Psoas muscle (tissue), 8 donors: ENCODE measurements at regions of chr9 and their contacts with region 1.

Region 1: GRCh38 chr9:109244157-109245132 is 76.4 kb downstream of the EPB41L4B start:
- DNase-seq: peak; percentile 68 to 82
- ATAC-seq: peak; percentile 86 to 91 (median 88)
- H3K4me3 ChIP-seq: no peak overlapping the region
- H3K27ac ChIP-seq: no peak overlapping the region
- H3K4me1 ChIP-seq: peaks cover 7% of the 10 kb centered on the region
- H3K27me3 ChIP-seq: no peaks in the 10 kb centered on the region
- CTCF ChIP-seq: peak; percentile 96

Region 2: DNA sequence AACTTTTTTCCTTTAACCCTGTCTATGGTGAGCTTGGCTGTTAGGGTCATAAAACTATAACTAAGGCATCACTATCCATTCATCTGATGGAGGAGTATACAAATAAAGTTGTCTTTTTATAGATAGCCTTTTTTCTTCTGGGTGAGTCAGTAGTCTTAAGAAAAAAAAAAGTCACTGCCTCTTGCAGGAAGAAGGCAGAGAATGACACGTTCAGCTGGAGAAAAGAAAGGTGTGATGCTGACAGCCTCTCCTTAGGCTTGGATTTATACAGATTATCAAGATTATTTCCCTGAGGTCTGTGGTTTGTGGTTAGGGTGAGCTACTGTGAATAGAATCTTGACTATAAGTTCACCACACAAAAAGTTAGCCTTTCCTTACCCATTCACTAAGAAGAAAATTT is 53.5 kb after region 1 on chr9:
- intact Hi-C with region 1: no loop called
- DNase-seq: no peak
- ATAC-seq: no peak
- H3K4me3 ChIP-seq: no peak overlapping the region
- H3K27ac ChIP-seq: no peak overlapping the region
- H3K4me1 ChIP-seq: no peaks in the 10 kb centered on the region
- H3K27me3 ChIP-seq: peaks cover 0 to 2% (median 0%) of the 10 kb centered on the region in 3 donors
- CTCF ChIP-seq: no peak

Region 3: GRCh38 chr9:109316207-109316640 is 71.8 kb after region 1 on chr9:
- intact Hi-C with region 1: loop called (anchors 2 kb)
- DNase-seq: peak; percentile 80 to 90
- ATAC-seq: peak; percentile 86 to 91 (median 90)
- H3K4me3 ChIP-seq: no peak overlapping the region
- H3K27ac ChIP-seq: no peak overlapping the region
- H3K4me1 ChIP-seq: no peaks in the 10 kb centered on the region
- H3K27me3 ChIP-seq: peaks cover 0 to 22% (median 5%) of the 10 kb centered on the region in 3 donors
- CTCF ChIP-seq: no peak

Region 4: GRCh38 chr9:109411798-109412352 is 167.4 kb after region 1 on chr9:
- intact Hi-C with region 1: loop called in 1 of 2 experiments (anchors 10 kb)
- DNase-seq: no peak
- ATAC-seq: peak; percentile 13 to 63 (median 39)
- H3K4me3 ChIP-seq: no peak overlapping the region
- H3K27ac ChIP-seq: peak overlapping the region; percentile 46
- H3K4me1 ChIP-seq: peaks cover 41% of the 10 kb centered on the region
- H3K27me3 ChIP-seq: no peaks in the 10 kb centered on the region
- CTCF ChIP-seq: peak; percentile 54

Region 5: DNA sequence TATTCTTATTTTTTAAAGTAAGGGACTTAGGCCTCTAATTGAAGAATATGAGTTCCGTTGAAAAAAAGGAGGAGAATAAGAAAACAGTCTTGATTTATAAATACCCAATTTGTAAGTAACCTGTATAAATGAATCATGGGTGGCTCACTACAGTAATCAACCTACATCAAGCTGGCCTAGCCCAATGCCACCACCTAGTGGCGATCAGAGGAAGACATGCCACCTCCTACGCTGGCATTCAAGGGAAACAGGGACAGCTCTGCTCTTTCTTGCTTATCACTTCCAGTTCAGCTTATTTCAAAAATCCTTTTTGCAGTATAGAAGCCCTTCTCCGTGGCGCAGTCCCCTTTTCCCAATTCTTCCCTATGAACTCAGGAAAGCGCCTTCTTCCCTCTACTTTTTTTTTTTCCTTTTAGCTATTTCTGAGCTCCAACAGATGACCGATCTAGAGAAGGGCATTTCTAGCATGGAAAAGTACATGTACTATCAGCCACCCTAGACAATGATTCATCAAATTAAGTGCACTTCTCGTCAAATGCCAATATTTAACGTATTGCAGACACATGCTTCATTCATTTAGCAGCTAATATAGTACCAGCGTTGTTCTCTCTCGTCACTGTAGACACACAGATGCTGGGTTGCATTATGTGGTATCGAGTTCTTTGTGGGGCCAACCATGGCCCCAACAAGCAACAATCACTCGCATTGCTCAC is 225.4 kb after region 1 on chr9:
- intact Hi-C with region 1: loop called in 1 of 2 experiments (anchors 5 kb)
- DNase-seq: peak; percentile 61 to 85
- ATAC-seq: peak; percentile 88 to 92 (median 90)
- H3K4me3 ChIP-seq: no peak overlapping the region
- H3K27ac ChIP-seq: peak overlapping the region; percentile 87
- H3K4me1 ChIP-seq: peaks cover 55% of the 10 kb centered on the region
- H3K27me3 ChIP-seq: no peaks in the 10 kb centered on the region
- CTCF ChIP-seq: peak; percentile 94

Region 6: DNA sequence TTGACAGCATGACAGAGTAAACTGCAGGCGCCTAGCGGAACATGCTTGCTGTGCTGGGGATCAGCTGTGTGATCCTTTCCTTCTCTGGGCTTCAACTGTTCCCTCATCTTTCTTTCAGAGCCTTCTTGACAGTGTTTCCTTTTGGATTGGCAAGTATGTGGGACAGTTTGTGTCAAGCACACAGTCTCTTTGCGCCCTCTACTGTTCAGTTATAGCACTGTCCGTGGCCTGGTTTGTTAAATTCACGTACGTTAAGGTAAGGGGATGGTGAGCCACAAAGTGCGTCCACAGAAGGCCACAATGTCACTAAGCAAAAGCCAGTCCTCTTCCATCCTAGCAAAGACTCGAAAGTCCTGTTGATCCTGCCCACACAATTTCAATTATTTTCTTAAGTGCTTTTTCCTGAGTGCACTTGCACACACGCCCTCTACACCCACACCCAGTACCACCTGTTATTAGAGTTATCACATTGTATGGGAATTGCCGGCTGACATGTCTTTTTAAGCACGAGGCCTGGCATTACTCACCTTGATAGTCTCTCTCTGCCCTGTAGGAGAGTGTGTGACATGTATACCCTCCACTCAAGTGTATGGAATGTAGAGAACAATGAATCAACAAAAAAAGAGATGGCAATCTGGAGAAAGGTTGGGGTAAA is 276.2 kb after region 1 on chr9:
- intact Hi-C with region 1: loop called (anchors 5 to 10 kb)
- DNase-seq: no peak
- ATAC-seq: peak; percentile 94 to 97 (median 95)
- H3K4me3 ChIP-seq: no peak overlapping the region
- H3K27ac ChIP-seq: no peak overlapping the region
- H3K4me1 ChIP-seq: peaks cover 4% of the 10 kb centered on the region
- H3K27me3 ChIP-seq: no peaks in the 10 kb centered on the region
- CTCF ChIP-seq: peak; percentile 90